HepG2 (cell line): ENCODE measurements at regions of chr15 and their contacts with region 1.

Region 1: DNA sequence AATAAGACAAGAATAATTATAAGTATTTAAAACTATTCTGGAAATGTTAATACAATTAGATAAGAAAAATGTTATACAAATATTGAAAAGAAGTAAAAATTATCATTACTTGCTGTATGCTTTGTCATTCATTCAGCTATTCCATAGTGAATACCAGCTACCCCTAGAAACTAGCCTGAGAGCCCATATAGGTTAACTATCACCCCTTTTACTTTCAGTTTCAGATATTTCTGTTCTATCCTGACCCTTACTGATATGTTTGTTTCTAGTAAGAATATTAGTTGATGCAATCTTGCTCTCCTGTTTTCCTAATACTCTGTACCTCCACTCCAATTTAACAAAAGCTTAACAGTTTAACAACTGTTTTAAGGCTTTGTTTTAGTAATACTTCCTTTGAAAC is 31.6 kb downstream of the FAM227B start:
- DNase-seq: no peak
- ATAC-seq: no peak
- H3K4me3 ChIP-seq: no peak overlapping the region
- H3K27ac ChIP-seq: no peak overlapping the region
- H3K4me1 ChIP-seq: peaks cover 5% of the 10 kb centered on the region; the same call in 1 of the 2 replicates
- H3K27me3 ChIP-seq: no peaks in the 10 kb centered on the region
- CTCF ChIP-seq: no peak
- EP300 ChIP-seq: no peak
- POLR2A ChIP-seq: no peak
- RAD21 ChIP-seq: no peak

Region 2: DNA sequence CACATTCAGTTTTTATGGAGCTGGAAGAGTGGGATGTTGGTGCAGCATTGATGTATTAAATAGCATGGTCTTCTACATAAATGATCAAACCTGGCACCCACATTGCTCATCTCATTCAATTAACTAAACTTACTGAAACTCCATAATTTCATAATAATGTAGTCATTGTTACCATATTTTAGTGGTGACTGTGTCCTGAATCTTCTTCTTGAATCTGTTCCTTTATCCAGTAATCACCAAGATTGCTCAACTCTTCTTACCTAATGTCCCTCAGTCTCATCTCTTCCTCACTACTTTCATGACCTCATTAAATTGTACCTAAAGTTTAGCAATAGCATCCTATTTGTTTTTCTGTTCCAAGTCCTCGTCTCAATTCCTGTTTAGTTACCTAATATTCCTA is 96.2 kb before region 1 on chr15:
- CTCF ChIA-PET with region 1: no interaction called
- POLR2A ChIA-PET with region 1: no interaction called
- in situ Hi-C with region 1: no loop called
- intact Hi-C with region 1: no loop called
- DNase-seq: no peak
- ATAC-seq: no peak
- H3K4me3 ChIP-seq: no peak overlapping the region
- H3K27ac ChIP-seq: no peak overlapping the region
- H3K4me1 ChIP-seq: no peaks in the 10 kb centered on the region
- H3K27me3 ChIP-seq: no peaks in the 10 kb centered on the region
- CTCF ChIP-seq: no peak
- EP300 ChIP-seq: no peak
- POLR2A ChIP-seq: no peak
- RAD21 ChIP-seq: no peak

Region 3: GRCh38 chr15:49530106-49530505 is 58.9 kb before region 1 on chr15:
- CTCF ChIA-PET with region 1: no interaction called
- POLR2A ChIA-PET with region 1: no interaction called
- in situ Hi-C with region 1: no loop called
- intact Hi-C with region 1: no loop called
- DNase-seq: peak; percentile 3
- ATAC-seq: no peak
- H3K4me3 ChIP-seq: no peak overlapping the region
- H3K27ac ChIP-seq: no peak overlapping the region
- H3K4me1 ChIP-seq: no peaks in the 10 kb centered on the region
- H3K27me3 ChIP-seq: no peaks in the 10 kb centered on the region
- CTCF ChIP-seq: no peak
- EP300 ChIP-seq: no peak
- POLR2A ChIP-seq: no peak
- RAD21 ChIP-seq: no peak

Region 4: GRCh38 chr15:49570174-49570573 is 18.9 kb before region 1 on chr15:
- CTCF ChIA-PET with region 1: no interaction called
- POLR2A ChIA-PET with region 1: no interaction called
- in situ Hi-C with region 1: no loop called
- intact Hi-C with region 1: no loop called
- DNase-seq: no peak
- ATAC-seq: no peak
- H3K4me3 ChIP-seq: no peak overlapping the region
- H3K27ac ChIP-seq: no peak overlapping the region
- H3K4me1 ChIP-seq: no peaks in the 10 kb centered on the region
- H3K27me3 ChIP-seq: no peaks in the 10 kb centered on the region
- CTCF ChIP-seq: no peak
- EP300 ChIP-seq: no peak
- POLR2A ChIP-seq: no peak
- RAD21 ChIP-seq: no peak

Region 5: GRCh38 chr15:49620658-49621368 is 31.8 kb after region 1 on chr15 and contains the starts of genes DTWD1 and FAM227B:
- CTCF ChIA-PET with region 1: no interaction called
- POLR2A ChIA-PET with region 1: interaction called, 31 read pairs
- in situ Hi-C with region 1: no loop called
- intact Hi-C with region 1: no loop called
- DNase-seq: peak; percentile 90
- ATAC-seq: peak; percentile 98
- H3K4me3 ChIP-seq: peak within 1 kb of the TSS; percentile 85 to 93 (median 92)
- H3K27ac ChIP-seq: peak within 1 kb of the TSS; percentile 92
- H3K4me1 ChIP-seq: peaks cover 35% of the 10 kb centered on the region
- H3K27me3 ChIP-seq: no peaks in the 10 kb centered on the region; a peak in 1 of 5 replicates
- CTCF ChIP-seq: peak; percentile 39
- EP300 ChIP-seq: peak; percentile 41 to 75; a peak in 3 of 4 replicates
- POLR2A ChIP-seq: peak; percentile 87 to 89
- RAD21 ChIP-seq: no peak; the same call in 1 of the 2 replicates
- total RNA-seq, gene DTWD1: 18.3 and 24.5 TPM in 2 replicates
- total RNA-seq, gene FAM227B: 2.3 and 2.6 TPM in 2 replicates